Aorta (tissue), 5 donors: ENCODE measurements at regions of chr2 and their contacts with region 1.

Region 1: GRCh38 chr2:98763209-98763951 is 32.4 kb upstream of the MGAT4A start:
- DNase-seq: no peak
- ATAC-seq: no peak
- H3K4me3 ChIP-seq: no peak overlapping the region
- H3K27ac ChIP-seq: no peak overlapping the region
- H3K4me1 ChIP-seq: peaks cover 0 to 1% of the 10 kb centered on the region in 2 donors
- H3K27me3 ChIP-seq: no peaks in the 10 kb centered on the region

Region 2: GRCh38 chr2:98649135-98649991 is 114.0 kb before region 1 on chr2:
- intact Hi-C with region 1: loop called in 1 of 2 experiments (anchors 2 kb)
- DNase-seq: peak; percentile 74 to 81
- ATAC-seq: peak; percentile 93
- H3K4me3 ChIP-seq: no peak overlapping the region
- H3K27ac ChIP-seq: no peak overlapping the region
- H3K4me1 ChIP-seq: no peaks in the 10 kb centered on the region
- H3K27me3 ChIP-seq: no peaks in the 10 kb centered on the region